ENCODE measurements at regions of chr7 and their contacts with region 1.

Region 1: GRCh38 chr7:15104411-15105092 is 202.0 kb upstream of the DGKB start:
- DNase-seq: no peak
- H3K4me3 Mint-ChIP-seq: no peak overlapping the region
- H3K27ac Mint-ChIP-seq: no peak overlapping the region
- H3K4me1 Mint-ChIP-seq: no peaks in the 10 kb centered on the region
- H3K27me3 Mint-ChIP-seq: peaks cover 19% of the 10 kb centered on the region
- CTCF ChIP-seq: no peak

Region 2: DNA sequence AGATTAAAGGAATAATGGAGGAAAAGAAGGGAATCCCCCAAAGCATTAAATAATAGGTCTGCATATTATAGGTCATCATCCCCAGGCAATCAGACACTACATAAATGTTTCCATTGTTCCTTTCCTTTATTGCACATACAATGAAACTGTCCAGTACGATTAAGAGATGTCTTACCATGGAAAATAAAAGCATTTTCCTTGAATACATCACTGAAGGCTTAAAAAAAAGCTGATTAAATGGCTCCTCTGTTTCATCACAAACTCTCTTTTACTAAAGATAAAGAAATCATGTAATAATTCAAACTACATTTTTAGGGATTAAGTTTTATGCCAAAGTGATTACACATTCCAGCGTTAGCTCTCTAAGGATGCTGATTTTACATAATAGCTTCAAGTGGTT is 141.3 kb after region 1 on chr7:
- CTCF ChIA-PET with region 1: no interaction called
- POLR2A ChIA-PET with region 1: no interaction called
- intact Hi-C with region 1: no loop called
- DNase-seq: no peak
- H3K4me3 Mint-ChIP-seq: no peak overlapping the region
- H3K27ac Mint-ChIP-seq: no peak overlapping the region
- H3K4me1 Mint-ChIP-seq: no peaks in the 10 kb centered on the region
- H3K27me3 Mint-ChIP-seq: peaks cover 28% of the 10 kb centered on the region
- CTCF ChIP-seq: no peak

Region 3: DNA sequence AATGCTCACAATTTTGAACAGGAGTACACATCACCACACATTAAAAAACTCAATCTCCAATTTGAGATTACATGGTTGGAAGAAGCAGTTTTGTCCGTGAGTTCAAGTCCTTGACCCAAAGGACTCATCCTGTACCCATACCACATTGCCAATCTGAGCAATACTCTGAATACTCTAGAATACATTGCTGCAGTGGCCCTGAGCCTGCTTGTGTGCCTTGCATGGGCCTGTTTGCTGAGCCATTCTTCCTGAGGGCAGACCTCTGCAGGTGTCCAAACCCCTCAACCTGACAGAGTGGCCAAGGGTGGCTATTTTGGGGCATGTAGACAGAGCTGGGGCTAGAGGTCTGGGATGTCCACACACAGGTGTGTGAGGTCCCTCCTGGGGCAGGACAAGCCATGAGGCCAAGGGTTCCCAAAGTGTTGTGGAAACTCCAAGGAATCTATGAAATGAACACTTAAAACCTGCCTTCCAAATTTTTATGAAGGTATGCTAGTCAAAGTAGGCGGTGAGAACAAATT is 441.8 kb after region 1 on chr7:
- CTCF ChIA-PET with region 1: no interaction called
- POLR2A ChIA-PET with region 1: no interaction called
- intact Hi-C with region 1: loop called (anchors 5 kb)
- DNase-seq: no peak
- H3K4me3 Mint-ChIP-seq: no peak overlapping the region
- H3K27ac Mint-ChIP-seq: no peak overlapping the region
- H3K4me1 Mint-ChIP-seq: no peaks in the 10 kb centered on the region
- H3K27me3 Mint-ChIP-seq: peaks cover 19% of the 10 kb centered on the region
- CTCF ChIP-seq: no peak